CD8-positive, alpha-beta memory T cell (primary cell): ENCODE measurements at regions of chr16 and their contacts with region 1.

Region 1: GRCh38 chr16:14285513-14286385 is 214.6 kb downstream of the MRTFB start:
- DNase-seq: peak; percentile 89 to 97 (median 94)
- H3K4me3 ChIP-seq: peak overlapping the region; percentile 92
- H3K4me3 Mint-ChIP-seq: peak overlapping the region; percentile 87 to 96 (median 91)
- H3K27ac ChIP-seq: peak overlapping the region; percentile 62
- H3K27ac Mint-ChIP-seq: peak overlapping the region; percentile 89 to 97 (median 94)
- H3K4me1 ChIP-seq: peaks cover 3% of the 10 kb centered on the region
- H3K4me1 Mint-ChIP-seq: peaks cover 18 to 32% (median 28%) of the 10 kb centered on the region in 3 donors
- H3K27me3 ChIP-seq: no peaks in the 10 kb centered on the region
- H3K27me3 Mint-ChIP-seq: peaks cover 0 to 16% of the 10 kb centered on the region in 2 donors

Region 2: DNA sequence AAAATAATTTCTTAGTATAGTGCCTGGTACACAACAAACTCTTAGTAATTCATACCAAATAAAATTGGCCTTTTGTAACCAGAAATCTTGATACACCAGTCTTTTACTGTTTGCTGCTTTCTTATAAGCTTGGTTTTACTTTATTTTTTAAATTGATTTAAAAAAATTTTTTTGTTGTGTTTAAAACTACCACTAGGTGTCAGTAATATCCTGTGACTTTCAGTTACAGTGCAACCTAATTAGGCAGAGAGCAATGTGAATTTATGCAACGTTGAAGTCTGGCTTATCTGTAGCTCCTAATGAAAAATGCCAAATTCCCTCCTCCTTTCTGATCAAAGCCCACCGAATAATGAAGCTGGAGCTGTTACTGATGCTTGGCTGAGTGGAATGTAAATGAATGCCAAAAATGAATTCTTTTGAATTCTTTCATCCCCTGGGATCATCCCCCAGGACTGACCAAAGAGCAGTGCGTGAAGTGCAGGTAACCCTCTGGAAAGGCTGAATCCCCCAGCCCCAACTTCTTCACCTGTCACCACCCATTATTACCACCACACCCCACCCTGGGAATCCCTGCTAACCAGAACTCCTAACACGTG is 361.9 kb before region 1 on chr16:
- CTCF ChIA-PET with region 1: interaction called, 10 read pairs
- POLR2A ChIA-PET with region 1: no interaction called
- DNase-seq: peak in 2 of 5 donors; percentile 27 to 37
- H3K4me3 ChIP-seq: no peak overlapping the region
- H3K4me3 Mint-ChIP-seq: no peak overlapping the region
- H3K27ac ChIP-seq: no peak overlapping the region
- H3K27ac Mint-ChIP-seq: peak overlapping the region in 3 of 8 donors; percentile 25 to 85 (median 84)
- H3K4me1 ChIP-seq: peaks cover 14% of the 10 kb centered on the region
- H3K4me1 Mint-ChIP-seq: peaks cover 25 to 29% (median 28%) of the 10 kb centered on the region in 3 donors
- H3K27me3 ChIP-seq: no peaks in the 10 kb centered on the region
- H3K27me3 Mint-ChIP-seq: no peaks in the 10 kb centered on the region

Region 3: GRCh38 chr16:14264327-14264943 is 21.3 kb before region 1 on chr16:
- CTCF ChIA-PET with region 1: interaction called, 3 read pairs
- POLR2A ChIA-PET with region 1: interaction called, 13 read pairs
- DNase-seq: no peak
- H3K4me3 ChIP-seq: no peak overlapping the region
- H3K4me3 Mint-ChIP-seq: no peak overlapping the region
- H3K27ac ChIP-seq: no peak overlapping the region
- H3K27ac Mint-ChIP-seq: no peak overlapping the region
- H3K4me1 ChIP-seq: no peaks in the 10 kb centered on the region
- H3K4me1 Mint-ChIP-seq: no peaks in the 10 kb centered on the region
- H3K27me3 ChIP-seq: no peaks in the 10 kb centered on the region
- H3K27me3 Mint-ChIP-seq: peaks cover 0 to under 1% of the 10 kb centered on the region in 2 donors